ENCODE measurements at regions of chr13 and their contacts with region 1.

Region 1: GRCh38 chr13:108155185-108156106 is 59.9 kb downstream of the LIG4 start:
- DNase-seq: peak; percentile 48
- H3K4me3 Mint-ChIP-seq: no peak overlapping the region
- H3K27ac Mint-ChIP-seq: no peak overlapping the region
- H3K4me1 Mint-ChIP-seq: peaks cover 10% of the 10 kb centered on the region
- H3K27me3 Mint-ChIP-seq: no peaks in the 10 kb centered on the region
- CTCF ChIP-seq: no peak

Region 2: GRCh38 chr13:107211073-107211472 is 944.4 kb before region 1 on chr13:
- CTCF ChIA-PET with region 1: no interaction called
- intact Hi-C with region 1: loop called (anchors 2 kb)
- DNase-seq: peak; percentile 50
- H3K4me3 Mint-ChIP-seq: no peak overlapping the region
- H3K27ac Mint-ChIP-seq: no peak overlapping the region
- H3K4me1 Mint-ChIP-seq: no peaks in the 10 kb centered on the region
- H3K27me3 Mint-ChIP-seq: no peaks in the 10 kb centered on the region
- CTCF ChIP-seq: peak; percentile 24

Region 3: DNA sequence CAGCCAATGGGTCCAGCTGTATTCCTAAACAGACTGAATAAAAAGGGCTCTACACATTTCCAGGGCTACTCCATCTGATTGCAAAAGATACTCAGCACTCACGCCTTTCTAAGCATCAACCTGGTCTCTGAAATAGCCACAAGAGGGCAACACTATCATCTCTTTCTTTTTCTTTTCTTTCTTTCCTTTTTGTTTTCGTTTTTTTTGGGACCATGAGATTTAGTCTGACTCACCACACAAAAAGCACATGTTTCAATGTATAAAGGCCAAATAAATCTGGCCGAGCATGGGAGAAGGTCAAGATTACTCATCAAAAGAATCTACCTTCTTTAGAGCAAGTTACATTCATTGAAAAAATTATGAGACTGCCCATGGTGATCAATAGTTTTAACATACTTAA is 781.9 kb before region 1 on chr13:
- CTCF ChIA-PET with region 1: no interaction called
- intact Hi-C with region 1: loop called (anchors 2 kb)
- DNase-seq: no peak
- H3K4me3 Mint-ChIP-seq: no peak overlapping the region
- H3K27ac Mint-ChIP-seq: no peak overlapping the region
- H3K4me1 Mint-ChIP-seq: no peaks in the 10 kb centered on the region
- H3K27me3 Mint-ChIP-seq: no peaks in the 10 kb centered on the region
- CTCF ChIP-seq: no peak

Region 4: DNA sequence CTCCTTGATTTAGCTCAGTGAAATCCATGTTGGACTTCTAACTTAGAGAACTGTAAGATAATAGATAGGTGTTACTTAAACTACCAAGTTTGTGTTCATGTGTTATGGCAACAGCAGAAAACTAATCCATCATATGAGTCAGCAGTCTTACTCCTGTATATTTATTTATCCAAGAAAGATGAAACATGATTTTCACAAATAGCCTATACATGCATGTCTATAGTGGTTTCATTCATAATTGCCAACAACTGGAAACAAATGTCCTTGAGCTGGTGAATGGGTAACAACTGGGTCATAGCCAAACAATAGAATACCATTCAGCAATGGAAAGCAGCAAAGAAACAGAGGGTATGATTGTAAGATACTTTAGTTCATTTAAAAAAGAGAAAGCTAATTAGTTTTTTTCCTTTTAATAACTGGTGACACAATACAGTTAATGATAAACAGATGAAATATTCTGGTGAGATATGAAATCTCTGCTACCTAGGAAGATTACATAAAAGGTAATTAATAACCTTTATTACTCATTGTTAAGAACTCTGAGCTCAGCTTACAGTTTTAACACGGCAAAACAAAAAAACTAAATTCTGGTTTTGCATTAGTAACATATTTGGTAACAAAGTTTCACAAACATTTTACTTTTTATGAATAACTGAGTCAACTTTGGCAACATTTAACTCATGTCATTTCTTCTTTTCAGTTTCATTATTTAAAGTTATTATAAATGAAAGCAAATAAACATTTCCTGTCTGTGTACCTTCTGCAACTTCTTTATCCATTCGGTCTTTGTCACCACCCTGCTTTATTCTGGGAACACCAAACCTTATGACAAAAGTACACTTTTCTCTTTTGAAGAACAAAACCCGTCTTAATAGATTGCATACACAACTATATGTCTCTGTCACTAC is 121.4 kb before region 1 on chr13:
- CTCF ChIA-PET with region 1: no interaction called
- intact Hi-C with region 1: loop called (anchors 5 kb)
- DNase-seq: no peak
- H3K4me3 Mint-ChIP-seq: no peak overlapping the region
- H3K27ac Mint-ChIP-seq: peak overlapping the region; percentile 61
- H3K4me1 Mint-ChIP-seq: peaks cover 21% of the 10 kb centered on the region
- H3K27me3 Mint-ChIP-seq: no peaks in the 10 kb centered on the region
- CTCF ChIP-seq: no peak

Region 5: GRCh38 chr13:108549934-108550333 is 394.5 kb after region 1 on chr13:
- CTCF ChIA-PET with region 1: no interaction called
- intact Hi-C with region 1: no loop called
- DNase-seq: no peak
- H3K4me3 Mint-ChIP-seq: no peak overlapping the region
- H3K27ac Mint-ChIP-seq: no peak overlapping the region
- H3K4me1 Mint-ChIP-seq: no peaks in the 10 kb centered on the region
- H3K27me3 Mint-ChIP-seq: no peaks in the 10 kb centered on the region
- CTCF ChIP-seq: no peak